CD4-positive, alpha-beta memory T cell (primary cell): ENCODE measurements at regions of chr5 and their contacts with region 1.

Region 1: GRCh38 chr5:98827161-98827560 is 53.7 kb downstream of the RGMB start:
- DNase-seq: peak in 3 of 5 donors; percentile 5 to 16 (median 14)
- H3K4me3 ChIP-seq: no peak overlapping the region
- H3K4me3 Mint-ChIP-seq: no peak overlapping the region
- H3K27ac ChIP-seq: no peak overlapping the region
- H3K27ac Mint-ChIP-seq: no peak overlapping the region
- H3K4me1 ChIP-seq: no peaks in the 10 kb centered on the region
- H3K4me1 Mint-ChIP-seq: no peaks in the 10 kb centered on the region
- H3K27me3 ChIP-seq: no peaks in the 10 kb centered on the region
- H3K27me3 Mint-ChIP-seq: no peaks in the 10 kb centered on the region

Region 2: DNA sequence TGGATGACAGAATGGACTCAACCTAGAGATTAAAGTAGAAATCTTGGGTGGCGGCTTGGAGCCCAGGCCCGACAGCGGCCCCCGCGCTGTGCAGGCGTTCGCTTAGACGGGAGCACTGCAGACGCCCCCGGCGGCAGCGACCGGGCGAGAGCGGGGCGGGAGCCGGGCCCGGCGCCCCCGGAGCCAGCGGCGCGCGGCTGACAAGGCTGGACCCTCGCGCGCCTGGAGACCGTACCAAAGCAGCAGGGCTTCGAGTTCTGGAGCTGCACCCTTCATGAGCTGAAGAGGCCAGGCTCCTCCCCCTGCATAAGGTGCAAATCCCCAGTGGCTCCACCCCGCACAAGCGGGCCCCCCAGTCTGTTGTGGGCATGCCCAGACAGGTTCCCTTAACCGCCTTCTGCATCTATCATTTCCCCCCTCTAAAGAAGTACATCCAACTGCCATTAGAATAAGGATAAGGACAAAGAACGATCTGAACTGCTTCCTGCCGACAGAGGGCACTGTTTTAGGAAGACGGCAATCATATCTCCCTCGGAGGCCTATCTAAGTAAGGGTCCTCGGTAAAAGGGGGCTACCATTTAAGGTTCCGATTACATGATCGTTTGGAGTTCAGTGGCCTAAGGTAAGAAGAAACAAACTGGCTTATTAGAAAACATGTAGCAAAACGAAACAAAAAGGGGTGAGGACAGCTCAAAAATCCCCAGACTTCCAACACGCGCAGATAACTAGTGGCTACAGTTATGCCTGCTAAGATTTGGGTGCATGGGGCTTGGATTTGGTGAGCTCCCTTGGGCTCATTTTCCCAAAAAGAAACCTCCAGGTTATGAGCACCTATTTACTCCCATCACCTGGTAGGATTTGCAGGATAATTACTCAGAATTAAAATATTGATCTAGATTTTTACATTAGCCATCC is 12.6 kb after region 1 on chr5:
- CTCF ChIA-PET with region 1: interaction called, 10 read pairs
- POLR2A ChIA-PET with region 1: no interaction called
- intact Hi-C with region 1: no loop called
- DNase-seq: peak in 2 of 5 donors; percentile 7 to 11
- H3K4me3 ChIP-seq: no peak overlapping the region
- H3K4me3 Mint-ChIP-seq: peak overlapping the region in 6 of 8 donors; percentile 7 to 61 (median 33)
- H3K27ac ChIP-seq: no peak overlapping the region
- H3K27ac Mint-ChIP-seq: no peak overlapping the region
- H3K4me1 ChIP-seq: no peaks in the 10 kb centered on the region
- H3K4me1 Mint-ChIP-seq: peaks cover 0 to 5% (median 3%) of the 10 kb centered on the region in 4 donors
- H3K27me3 ChIP-seq: no peaks in the 10 kb centered on the region
- H3K27me3 Mint-ChIP-seq: no peaks in the 10 kb centered on the region